Lower lobe of right lung (tissue), 2 donors: ENCODE measurements at regions of chr18 and their contacts with region 1.

Region 1: DNA sequence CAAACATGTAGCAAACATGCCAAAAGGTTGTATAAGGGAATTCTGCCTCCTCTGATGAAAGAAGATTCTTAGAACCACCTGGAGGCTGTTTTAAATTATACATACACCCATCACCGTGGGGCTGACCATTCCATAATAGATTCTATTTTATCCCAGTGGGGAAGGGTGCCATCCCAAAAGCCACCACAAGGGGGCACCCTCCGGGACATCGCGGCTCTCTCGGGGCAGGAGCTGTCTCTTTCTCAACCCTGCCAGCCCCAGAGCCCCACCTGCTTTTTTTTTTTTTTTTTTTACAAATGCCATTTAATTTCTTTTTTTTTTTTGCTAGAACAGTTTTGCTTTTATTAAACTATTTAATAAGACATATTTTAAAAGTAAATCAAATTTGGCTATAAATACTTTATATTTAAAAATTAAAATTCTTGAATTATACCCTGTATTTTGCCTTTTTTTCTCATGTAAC is 8.6 kb upstream of the MTCL1 start:
- DNase-seq: peak; percentile 81
- ATAC-seq: peak; percentile 92 to 96
- H3K4me3 ChIP-seq: no peak overlapping the region
- H3K27ac ChIP-seq: no peak overlapping the region
- H3K4me1 ChIP-seq: no peaks in the 10 kb centered on the region
- H3K27me3 ChIP-seq: peaks cover 4% of the 10 kb centered on the region
- CTCF ChIP-seq: peak; percentile 94

Region 2: GRCh38 chr18:8254654-8255053 is 442.1 kb before region 1 on chr18:
- intact Hi-C with region 1: no loop called
- DNase-seq: no peak
- ATAC-seq: no peak
- H3K4me3 ChIP-seq: no peak overlapping the region
- H3K27ac ChIP-seq: no peak overlapping the region
- H3K4me1 ChIP-seq: no peaks in the 10 kb centered on the region
- H3K27me3 ChIP-seq: no peaks in the 10 kb centered on the region
- CTCF ChIP-seq: no peak

Region 3: GRCh38 chr18:8982416-8983184 is 285.8 kb after region 1 on chr18:
- intact Hi-C with region 1: loop called (anchors 5 kb)
- DNase-seq: no peak
- ATAC-seq: peak; percentile 70 to 87
- H3K4me3 ChIP-seq: no peak overlapping the region
- H3K27ac ChIP-seq: no peak overlapping the region
- H3K4me1 ChIP-seq: no peaks in the 10 kb centered on the region
- H3K27me3 ChIP-seq: peaks cover 3% of the 10 kb centered on the region
- CTCF ChIP-seq: peak; percentile 41